B cell (primary cell): ENCODE measurements at regions of chr3 and their contacts with region 1.

Region 1: GRCh38 chr3:32502118-32502945 is at the start of gene CMTM6:
- DNase-seq: peak; percentile 86
- ATAC-seq: peak; percentile 83
- H3K4me3 ChIP-seq: peak within 1 kb of the TSS; percentile 82 to 99 (median 97)
- H3K4me3 Mint-ChIP-seq: peak within 1 kb of the TSS; percentile 90
- H3K27ac ChIP-seq: peak within 1 kb of the TSS; percentile 99
- H3K27ac Mint-ChIP-seq: peak within 1 kb of the TSS; percentile 93
- H3K4me1 ChIP-seq: peaks cover 26 to 29% of the 10 kb centered on the region in 2 donors
- H3K4me1 Mint-ChIP-seq: peaks cover 36% of the 10 kb centered on the region
- H3K27me3 ChIP-seq: no peaks in the 10 kb centered on the region
- H3K27me3 Mint-ChIP-seq: no peaks in the 10 kb centered on the region
- CTCF ChIP-seq: no peak
- total RNA-seq, gene CMTM6: 66.3 and 67.7 TPM in 2 replicates

Region 2: DNA sequence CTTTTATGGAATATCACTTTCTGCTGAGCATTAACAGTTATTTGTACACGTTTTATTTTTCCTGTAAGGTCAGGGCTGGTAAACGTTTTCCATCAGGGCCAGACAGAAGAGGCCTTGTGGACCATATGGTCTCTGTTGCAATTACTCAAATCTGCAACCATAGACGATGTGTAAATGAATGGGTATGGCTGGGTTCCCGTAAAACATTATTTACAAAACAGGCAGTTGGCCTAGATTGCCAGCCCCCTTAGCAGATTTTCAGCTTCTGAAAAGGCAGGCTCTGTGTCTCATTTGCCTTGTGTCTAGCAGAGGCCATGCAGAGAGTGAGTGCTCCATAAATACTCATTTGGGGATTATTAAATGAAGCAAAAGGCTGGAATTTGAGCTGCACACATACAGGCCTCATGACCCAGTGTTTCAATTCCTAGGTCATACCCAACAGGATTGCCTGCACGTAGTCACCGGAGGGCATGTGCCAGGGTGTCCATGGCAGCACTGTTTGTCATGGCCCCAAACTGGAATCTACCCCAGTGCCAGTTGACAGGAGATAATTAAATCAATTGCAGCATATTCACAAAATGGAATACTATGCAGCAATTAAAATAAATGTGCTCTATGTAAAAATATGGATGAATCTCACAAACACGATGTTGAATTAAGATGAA is 344.6 kb before region 1 on chr3:
- CTCF ChIA-PET with region 1: no interaction called
- POLR2A ChIA-PET with region 1: no interaction called
- intact Hi-C with region 1: no loop called
- DNase-seq: no peak
- ATAC-seq: no peak
- H3K4me3 ChIP-seq: no peak overlapping the region
- H3K4me3 Mint-ChIP-seq: no peak overlapping the region
- H3K27ac ChIP-seq: no peak overlapping the region
- H3K27ac Mint-ChIP-seq: no peak overlapping the region
- H3K4me1 ChIP-seq: no peaks in the 10 kb centered on the region
- H3K4me1 Mint-ChIP-seq: no peaks in the 10 kb centered on the region
- H3K27me3 ChIP-seq: no peaks in the 10 kb centered on the region
- H3K27me3 Mint-ChIP-seq: no peaks in the 10 kb centered on the region
- CTCF ChIP-seq: no peak

Region 3: GRCh38 chr3:32457971-32458471 is 44.3 kb before region 1 on chr3:
- CTCF ChIA-PET with region 1: no interaction called
- POLR2A ChIA-PET with region 1: no interaction called
- intact Hi-C with region 1: no loop called
- DNase-seq: peak; percentile 89
- ATAC-seq: peak; percentile 59
- H3K4me3 ChIP-seq: peak overlapping the region in 3 of 5 experiments; percentile 13 to 27 (median 13)
- H3K4me3 Mint-ChIP-seq: peak overlapping the region; percentile 77
- H3K27ac ChIP-seq: peak overlapping the region; percentile 85 to 94
- H3K27ac Mint-ChIP-seq: peak overlapping the region; percentile 93
- H3K4me1 ChIP-seq: peaks cover 59 to 72% of the 10 kb centered on the region in 2 donors
- H3K4me1 Mint-ChIP-seq: peaks cover 58% of the 10 kb centered on the region
- H3K27me3 ChIP-seq: no peaks in the 10 kb centered on the region
- H3K27me3 Mint-ChIP-seq: no peaks in the 10 kb centered on the region
- CTCF ChIP-seq: no peak

Region 4: DNA sequence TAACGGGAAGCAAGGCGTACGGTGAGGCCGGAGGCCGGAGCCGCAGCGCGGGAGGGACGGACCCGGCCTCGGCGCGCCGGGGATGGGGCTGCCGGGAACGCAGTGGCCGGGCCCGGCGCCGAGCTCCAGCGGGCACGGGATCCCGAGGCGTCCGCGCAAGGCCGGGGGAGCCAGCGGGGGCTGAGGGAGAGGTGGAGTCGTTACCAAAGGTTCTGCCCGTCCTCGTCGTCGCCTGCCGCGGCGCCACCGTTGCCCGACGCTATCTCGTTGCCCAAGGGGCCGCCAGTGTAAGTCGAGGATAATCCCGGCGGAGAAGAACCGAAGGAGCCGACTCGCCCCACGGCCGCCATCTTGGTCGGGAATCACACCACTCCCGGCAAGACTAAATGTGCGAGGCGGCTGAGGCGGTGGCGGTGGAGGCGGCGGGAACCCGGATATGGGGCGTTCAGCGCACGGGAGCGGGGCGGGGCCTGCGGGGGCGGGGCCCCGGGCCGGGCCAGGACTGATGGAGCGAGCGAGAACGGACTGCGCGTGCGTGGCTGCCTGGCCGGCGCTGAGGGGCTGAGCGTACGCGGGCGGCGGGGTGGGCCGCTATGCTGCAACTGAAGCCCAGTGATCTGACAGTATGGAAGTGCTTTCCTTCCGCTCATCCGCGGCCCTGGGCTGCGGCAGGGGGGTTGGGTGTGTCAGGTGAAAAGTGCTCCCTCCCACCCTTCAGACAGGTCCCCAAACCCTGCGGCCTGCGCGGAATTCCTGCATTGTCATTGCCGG is 68.3 kb after region 1 on chr3 and contains the start of gene DYNC1LI1:
- CTCF ChIA-PET with region 1: interaction called, 6 read pairs
- POLR2A ChIA-PET with region 1: interaction called, 3 read pairs
- intact Hi-C with region 1: loop called (anchors 1 kb)
- DNase-seq: peak; percentile 95
- ATAC-seq: peak; percentile 96
- H3K4me3 ChIP-seq: peak within 1 kb of the TSS; percentile 55 to 96 (median 92)
- H3K4me3 Mint-ChIP-seq: peak within 1 kb of the TSS; percentile 94
- H3K27ac ChIP-seq: peak within 1 kb of the TSS; percentile 84 to 93
- H3K27ac Mint-ChIP-seq: peak within 1 kb of the TSS; percentile 94
- H3K4me1 ChIP-seq: peaks cover 22 to 24% of the 10 kb centered on the region in 2 donors
- H3K4me1 Mint-ChIP-seq: peaks cover 29% of the 10 kb centered on the region
- H3K27me3 ChIP-seq: no peaks in the 10 kb centered on the region
- H3K27me3 Mint-ChIP-seq: no peaks in the 10 kb centered on the region
- CTCF ChIP-seq: no peak
- total RNA-seq, gene DYNC1LI1: 38.8 and 47.8 TPM in 2 replicates